Activated CD8-positive, alpha-beta T cell treated with anti-CD3 and anti-CD28 coated beads, Interleukin-2, amount 10 ng/mL, durations not matched to agents 7 days and 5 days (primary cell): ENCODE measurements at regions of chr18 and their contacts with region 1.

Region 1: GRCh38 chr18:812376-813171 is 532 bp upstream of the YES1 start:
- DNase-seq: peak; percentile 84
- ATAC-seq: peak; percentile 66
- H3K4me3 Mint-ChIP-seq: peak overlapping the region; percentile 79
- H3K27ac Mint-ChIP-seq: peak overlapping the region; percentile 98
- H3K4me1 Mint-ChIP-seq: peaks cover 68% of the 10 kb centered on the region
- H3K27me3 Mint-ChIP-seq: no peaks in the 10 kb centered on the region

Region 2: GRCh38 chr18:824179-824578 is 11.6 kb after region 1 on chr18:
- CTCF ChIA-PET with region 1: interaction called, 170 read pairs
- POLR2A ChIA-PET with region 1: interaction called, 81 read pairs
- DNase-seq: no peak
- ATAC-seq: no peak
- H3K4me3 Mint-ChIP-seq: no peak overlapping the region
- H3K27ac Mint-ChIP-seq: no peak overlapping the region
- H3K4me1 Mint-ChIP-seq: peaks cover 6% of the 10 kb centered on the region
- H3K27me3 Mint-ChIP-seq: no peaks in the 10 kb centered on the region